MCF 10A (cell line): ENCODE measurements at regions of chr4 and their contacts with region 1.

Region 1: GRCh38 chr4:101169044-101170014 is 178.0 kb downstream of the PPP3CA start:
- DNase-seq: peak; percentile 85
- H3K4me3 Mint-ChIP-seq: no peak overlapping the region
- H3K27ac Mint-ChIP-seq: no peak overlapping the region
- H3K4me1 Mint-ChIP-seq: peaks cover 20% of the 10 kb centered on the region
- H3K27me3 Mint-ChIP-seq: no peaks in the 10 kb centered on the region
- CTCF ChIP-seq: peak; percentile 44

Region 2: GRCh38 chr4:100935090-100935489 is 234.2 kb before region 1 on chr4:
- CTCF ChIA-PET with region 1: no interaction called
- POLR2A ChIA-PET with region 1: no interaction called
- intact Hi-C with region 1: loop called (anchors 10 kb)
- DNase-seq: peak; percentile 52
- H3K4me3 Mint-ChIP-seq: no peak overlapping the region
- H3K27ac Mint-ChIP-seq: no peak overlapping the region
- H3K4me1 Mint-ChIP-seq: peaks cover 15% of the 10 kb centered on the region
- H3K27me3 Mint-ChIP-seq: no peaks in the 10 kb centered on the region
- CTCF ChIP-seq: no peak

Region 3: DNA sequence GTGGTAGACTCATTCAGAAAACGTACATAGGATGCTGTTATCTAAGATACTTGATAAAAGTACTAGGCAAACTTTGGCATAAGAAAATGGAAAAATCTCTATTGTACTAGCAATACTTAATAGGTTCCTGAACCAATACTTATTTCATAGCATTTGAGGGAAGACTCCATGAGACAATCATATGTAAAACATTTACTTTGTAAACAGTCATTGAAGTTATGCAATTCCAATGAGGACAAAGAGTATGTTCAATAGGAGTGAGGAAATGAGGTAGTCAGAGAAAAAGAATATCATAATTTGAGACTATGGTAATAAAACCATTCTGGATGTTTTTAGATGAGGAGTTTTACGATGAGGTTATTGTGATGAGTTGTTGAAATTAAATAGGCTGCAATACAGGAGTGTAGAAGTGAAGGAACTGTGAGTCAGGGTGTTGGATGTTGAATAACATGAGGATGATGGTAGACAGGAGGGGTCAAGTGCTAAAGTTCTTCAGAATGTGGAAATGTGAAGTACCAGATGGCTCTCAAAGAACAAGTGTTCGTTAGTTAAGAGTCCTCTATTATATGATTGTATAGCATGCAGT is 219.9 kb before region 1 on chr4:
- CTCF ChIA-PET with region 1: no interaction called
- POLR2A ChIA-PET with region 1: no interaction called
- intact Hi-C with region 1: no loop called
- DNase-seq: no peak
- H3K4me3 Mint-ChIP-seq: no peak overlapping the region
- H3K27ac Mint-ChIP-seq: no peak overlapping the region
- H3K4me1 Mint-ChIP-seq: no peaks in the 10 kb centered on the region
- H3K27me3 Mint-ChIP-seq: no peaks in the 10 kb centered on the region
- CTCF ChIP-seq: no peak

Region 4: DNA sequence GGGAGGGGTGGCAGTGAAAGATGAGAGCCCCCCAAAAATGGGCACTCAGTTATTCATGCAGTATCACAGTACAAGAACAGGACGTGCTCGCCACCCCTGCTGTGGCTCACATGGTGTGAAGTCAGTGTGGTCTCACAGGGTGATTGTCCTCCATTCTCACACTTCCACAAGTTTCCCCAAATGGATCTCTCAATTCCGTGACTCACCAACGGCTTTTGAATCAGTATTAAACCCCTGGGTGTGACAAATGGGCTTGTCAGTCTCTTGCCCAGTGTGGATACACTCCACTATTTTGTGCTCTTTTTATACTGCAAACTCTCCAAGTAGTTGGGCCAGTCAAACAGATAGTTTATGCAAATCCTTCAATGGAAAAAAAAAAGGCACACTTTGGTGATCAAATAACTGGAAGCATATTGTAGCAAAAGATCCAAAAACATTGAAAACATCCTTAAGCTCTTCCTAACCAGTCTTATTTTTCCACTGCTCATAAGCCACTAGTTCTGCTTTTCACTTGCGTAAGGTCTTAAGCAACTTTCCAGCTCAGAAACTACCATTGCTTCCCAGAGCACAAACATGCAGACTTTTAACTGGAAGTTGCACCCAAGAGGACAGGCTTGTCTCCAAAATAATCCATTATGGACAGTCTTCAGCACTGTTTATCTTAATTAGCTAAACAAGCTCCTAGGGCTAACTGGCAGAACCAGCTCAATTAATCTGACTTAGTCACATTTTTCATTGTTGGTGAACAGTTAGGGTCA is 187.7 kb before region 1 on chr4:
- CTCF ChIA-PET with region 1: no interaction called
- POLR2A ChIA-PET with region 1: no interaction called
- intact Hi-C with region 1: no loop called
- DNase-seq: peak; percentile 59
- H3K4me3 Mint-ChIP-seq: no peak overlapping the region
- H3K27ac Mint-ChIP-seq: peak overlapping the region; percentile 16
- H3K4me1 Mint-ChIP-seq: peaks cover 31% of the 10 kb centered on the region
- H3K27me3 Mint-ChIP-seq: no peaks in the 10 kb centered on the region
- CTCF ChIP-seq: no peak

Region 5: GRCh38 chr4:101187841-101188240 is 18.5 kb after region 1 on chr4:
- CTCF ChIA-PET with region 1: interaction called, 10 read pairs
- POLR2A ChIA-PET with region 1: interaction called, 4 read pairs
- intact Hi-C with region 1: no loop called
- DNase-seq: peak; percentile 43
- H3K4me3 Mint-ChIP-seq: no peak overlapping the region
- H3K27ac Mint-ChIP-seq: no peak overlapping the region
- H3K4me1 Mint-ChIP-seq: peaks cover 26% of the 10 kb centered on the region
- H3K27me3 Mint-ChIP-seq: no peaks in the 10 kb centered on the region
- CTCF ChIP-seq: peak; percentile 30

Region 6: GRCh38 chr4:101527188-101527587 is 357.9 kb after region 1 on chr4:
- CTCF ChIA-PET with region 1: interaction called, 3 read pairs
- POLR2A ChIA-PET with region 1: no interaction called
- intact Hi-C with region 1: loop called (anchors 10 kb)
- DNase-seq: peak; percentile 0
- H3K4me3 Mint-ChIP-seq: no peak overlapping the region
- H3K27ac Mint-ChIP-seq: no peak overlapping the region
- H3K4me1 Mint-ChIP-seq: no peaks in the 10 kb centered on the region
- H3K27me3 Mint-ChIP-seq: no peaks in the 10 kb centered on the region
- CTCF ChIP-seq: no peak